Caco-2 (cell line): ENCODE measurements at regions of chr17 and their contacts with region 1.

Region 1: GRCh38 chr17:48024937-48025906 is 12.4 kb downstream of the COPZ2 start:
- DNase-seq: peak; percentile 100
- H3K4me3 ChIP-seq: peak overlapping the region; percentile 43
- H3K4me3 Mint-ChIP-seq: peak overlapping the region; percentile 87
- H3K27ac Mint-ChIP-seq: peak overlapping the region; percentile 89
- H3K4me1 ChIP-seq: peaks cover 26% of the 10 kb centered on the region
- H3K4me1 Mint-ChIP-seq: peaks cover 34% of the 10 kb centered on the region
- H3K27me3 ChIP-seq: peaks cover 5% of the 10 kb centered on the region
- H3K27me3 Mint-ChIP-seq: peaks cover 17% of the 10 kb centered on the region
- CTCF ChIP-seq: peak; percentile 98 to 100

Region 2: DNA sequence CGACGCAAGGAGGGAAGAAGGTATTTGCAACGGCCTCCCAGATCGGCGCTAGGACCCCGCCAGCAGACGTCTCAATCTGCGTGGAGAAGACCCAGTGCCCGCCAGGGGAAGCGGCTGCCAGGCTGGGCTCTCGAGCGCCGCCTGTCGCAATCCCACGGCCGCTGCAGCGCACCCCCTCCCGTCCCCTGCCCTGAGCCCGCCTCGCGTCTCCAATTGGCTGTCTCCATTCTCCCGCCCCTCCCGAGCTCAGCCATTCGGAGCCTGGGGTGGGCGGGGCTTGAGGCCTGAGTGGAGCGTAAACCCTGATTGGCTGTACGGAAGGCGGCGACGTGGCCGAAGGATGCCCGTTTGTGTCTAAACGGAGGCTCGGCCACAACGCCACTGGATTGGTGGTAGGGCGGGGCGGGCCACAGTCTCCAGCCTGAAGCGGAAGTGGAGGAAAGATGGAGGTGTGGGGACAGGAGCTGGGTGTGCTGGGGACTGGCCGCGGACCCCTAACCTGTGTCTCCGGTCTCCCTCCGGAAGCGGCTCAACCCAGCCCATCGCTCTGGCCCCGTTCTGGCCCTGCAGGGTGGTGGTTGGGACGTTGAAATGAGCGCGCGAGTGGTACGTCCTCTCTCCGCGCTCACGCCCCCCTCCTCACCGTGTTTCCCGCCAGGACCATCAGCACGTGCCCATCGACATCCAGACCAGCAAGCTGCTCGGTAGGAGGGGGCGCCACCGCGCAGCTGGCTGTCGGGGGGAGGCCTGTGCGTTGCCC is 54.3 kb before region 1 on chr17 and contains the start of gene CDK5RAP3:
- CTCF ChIA-PET with region 1: interaction called, 37 read pairs
- POLR2A ChIA-PET with region 1: interaction called, 5 read pairs
- intact Hi-C with region 1: no loop called
- DNase-seq: peak; percentile 100
- H3K4me3 ChIP-seq: peak within 1 kb of the TSS; percentile 72
- H3K4me3 Mint-ChIP-seq: peak within 1 kb of the TSS; percentile 94
- H3K27ac Mint-ChIP-seq: peak within 1 kb of the TSS; percentile 92
- H3K4me1 ChIP-seq: peaks cover 40% of the 10 kb centered on the region
- H3K4me1 Mint-ChIP-seq: peaks cover 30% of the 10 kb centered on the region
- H3K27me3 ChIP-seq: no peaks in the 10 kb centered on the region
- H3K27me3 Mint-ChIP-seq: no peaks in the 10 kb centered on the region
- CTCF ChIP-seq: peak; percentile 99 to 100
- total RNA-seq, gene CDK5RAP3: 425 and 427 TPM in 2 replicates

Region 3: DNA sequence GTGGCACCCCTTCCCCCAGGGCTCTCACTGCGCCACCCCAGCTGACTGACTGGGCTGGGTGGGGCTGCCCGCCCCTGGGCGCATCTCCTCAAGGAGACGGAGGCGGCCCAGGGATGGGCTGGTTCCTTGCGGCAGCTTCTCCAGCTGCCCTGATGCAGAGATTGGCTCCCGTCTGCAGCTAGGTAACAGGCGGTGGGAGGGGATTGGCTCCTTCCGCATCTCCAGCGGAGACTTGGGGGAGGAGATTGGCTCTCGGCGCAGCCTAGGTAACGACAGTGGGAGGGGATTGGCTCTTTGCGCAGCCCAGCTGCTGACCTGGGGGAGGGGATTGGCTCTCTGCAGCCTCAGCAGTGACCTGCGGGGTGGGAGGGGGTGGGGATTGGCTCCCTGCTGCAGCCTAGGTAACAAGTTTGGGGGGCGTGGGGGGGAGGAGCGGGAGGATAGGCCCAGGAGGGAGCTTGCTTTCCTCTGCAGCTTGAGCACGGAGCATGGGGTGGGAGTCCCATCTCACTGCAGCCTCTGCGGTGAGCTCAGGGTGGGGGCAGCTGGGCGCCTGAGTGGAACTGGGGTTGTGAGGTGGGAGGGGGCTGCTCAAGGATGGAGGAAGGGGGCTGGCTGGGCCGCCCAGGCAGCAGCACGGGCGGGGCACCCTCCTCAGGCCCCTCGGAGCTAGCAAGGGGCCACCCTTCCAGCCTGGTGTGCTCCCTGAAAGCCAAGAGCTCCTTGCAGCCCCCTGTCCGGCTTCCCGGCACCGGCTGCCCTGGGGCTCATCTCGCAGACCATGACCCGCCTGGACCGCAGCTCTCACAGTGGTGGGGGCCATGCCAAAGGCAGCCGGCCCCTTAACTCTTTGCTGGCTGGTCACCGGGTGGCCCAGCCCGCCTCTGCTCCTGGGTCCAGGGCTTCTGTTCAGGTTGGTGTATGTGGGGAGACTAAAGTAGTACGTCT is 29.3 kb after region 1 on chr17:
- CTCF ChIA-PET with region 1: interaction called, 143 read pairs
- POLR2A ChIA-PET with region 1: interaction called, 46 read pairs
- intact Hi-C with region 1: no loop called
- DNase-seq: peak in 1 of 2 experiments; percentile 53
- H3K4me3 ChIP-seq: no peak overlapping the region
- H3K4me3 Mint-ChIP-seq: peak overlapping the region; percentile 18
- H3K27ac Mint-ChIP-seq: peak overlapping the region; percentile 97
- H3K4me1 ChIP-seq: peaks cover 30% of the 10 kb centered on the region
- H3K4me1 Mint-ChIP-seq: peaks cover 40% of the 10 kb centered on the region
- H3K27me3 ChIP-seq: no peaks in the 10 kb centered on the region
- H3K27me3 Mint-ChIP-seq: no peaks in the 10 kb centered on the region
- CTCF ChIP-seq: no peak

Region 4: DNA sequence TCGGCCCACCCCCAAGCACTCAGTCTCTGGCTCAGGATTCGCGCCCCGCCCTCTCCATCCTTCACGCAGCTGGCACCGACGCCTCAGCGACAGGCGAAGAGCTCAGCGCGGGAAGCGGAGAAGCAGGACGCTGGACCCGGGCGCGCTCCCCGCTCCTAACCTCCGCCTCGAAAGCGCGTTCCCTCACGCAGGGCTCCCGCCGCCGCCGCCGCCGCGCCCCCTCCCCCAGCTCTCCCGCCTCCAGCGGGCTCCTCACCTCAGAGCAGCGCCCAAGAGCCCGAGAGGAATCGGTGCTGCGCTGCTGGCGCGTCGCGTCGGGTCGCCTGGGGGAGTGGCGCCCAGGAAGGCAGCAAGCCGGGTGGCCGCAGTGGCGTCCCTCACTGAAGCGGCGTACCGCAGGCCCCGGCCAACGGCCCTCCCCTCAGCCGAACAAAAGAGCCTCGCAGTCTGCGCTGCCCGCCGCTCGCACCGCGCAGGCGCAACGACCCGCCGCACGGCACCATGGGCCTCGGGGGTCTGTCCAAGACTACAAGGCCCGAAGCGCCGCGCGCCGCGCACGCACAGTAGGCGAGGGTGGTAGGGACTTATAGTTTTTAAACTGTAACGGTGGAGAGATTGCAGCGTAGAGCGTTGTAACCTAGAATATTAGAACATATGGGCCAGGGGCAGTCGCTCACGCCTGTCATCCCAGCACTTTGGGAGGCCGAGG is 75.9 kb after region 1 on chr17 and contains the start of gene CBX1:
- CTCF ChIA-PET with region 1: interaction called, 44 read pairs
- POLR2A ChIA-PET with region 1: no interaction called
- intact Hi-C with region 1: loop called (anchors 2 kb)
- DNase-seq: peak; percentile 99 to 100
- H3K4me3 ChIP-seq: peak within 1 kb of the TSS; percentile 83
- H3K4me3 Mint-ChIP-seq: peak within 1 kb of the TSS; percentile 93
- H3K27ac Mint-ChIP-seq: peak within 1 kb of the TSS; percentile 79
- H3K4me1 ChIP-seq: peaks cover 8% of the 10 kb centered on the region
- H3K4me1 Mint-ChIP-seq: peaks cover 7% of the 10 kb centered on the region
- H3K27me3 ChIP-seq: no peaks in the 10 kb centered on the region
- H3K27me3 Mint-ChIP-seq: no peaks in the 10 kb centered on the region
- CTCF ChIP-seq: no peak
- total RNA-seq, gene CBX1: 213 and 214 TPM in 2 replicates

Region 5: GRCh38 chr17:48181653-48182052 is 156.4 kb after region 1 on chr17:
- CTCF ChIA-PET with region 1: interaction called, 4 read pairs
- POLR2A ChIA-PET with region 1: no interaction called
- intact Hi-C with region 1: loop called (anchors 1 kb)
- DNase-seq: peak; percentile 67 to 76
- H3K4me3 ChIP-seq: no peak overlapping the region
- H3K4me3 Mint-ChIP-seq: no peak overlapping the region
- H3K27ac Mint-ChIP-seq: no peak overlapping the region
- H3K4me1 ChIP-seq: no peaks in the 10 kb centered on the region
- H3K4me1 Mint-ChIP-seq: no peaks in the 10 kb centered on the region
- H3K27me3 ChIP-seq: 0 out of 2 replicates have a peak, but pooled peaks cover 2% of the 10 kb centered on the region
- H3K27me3 Mint-ChIP-seq: peaks cover 18% of the 10 kb centered on the region
- CTCF ChIP-seq: peak; percentile 77 to 95

Region 6: DNA sequence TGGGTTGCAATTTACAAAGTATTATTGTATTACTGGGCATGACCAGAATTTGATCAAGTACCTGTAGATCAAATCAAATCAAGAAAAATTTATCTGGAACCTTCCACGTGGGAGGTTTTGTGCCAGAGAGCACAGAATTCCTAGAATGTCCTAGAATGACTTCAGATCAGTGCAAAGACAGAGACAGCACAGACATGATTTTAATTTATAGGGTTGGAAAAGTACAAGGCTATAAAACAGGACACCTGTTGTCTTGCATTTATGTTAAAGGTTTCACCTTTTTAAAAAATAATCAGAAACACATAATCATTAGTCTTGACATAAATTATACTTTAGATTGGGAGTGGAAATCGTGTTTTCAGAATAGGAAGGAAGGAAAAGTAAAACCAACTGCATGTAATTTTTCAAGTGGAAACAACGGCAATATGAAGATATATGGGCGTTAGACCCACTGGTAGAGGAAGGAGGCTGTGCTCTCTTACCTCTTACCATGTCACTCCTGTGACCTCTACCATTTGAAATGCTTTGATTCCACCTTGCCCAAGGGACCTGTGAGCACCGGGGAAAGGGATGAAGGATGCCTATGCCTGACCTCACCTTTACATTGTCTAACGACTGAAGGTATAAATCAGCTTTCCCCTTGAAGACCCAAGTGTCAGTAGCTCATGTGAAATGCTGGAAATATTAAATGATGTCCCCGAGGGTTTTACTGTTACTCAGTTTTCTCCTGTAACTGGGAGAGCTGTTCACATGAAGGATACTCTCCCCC is 182.7 kb after region 1 on chr17:
- CTCF ChIA-PET with region 1: no interaction called
- POLR2A ChIA-PET with region 1: no interaction called
- intact Hi-C with region 1: no loop called
- DNase-seq: no peak
- H3K4me3 ChIP-seq: no peak overlapping the region
- H3K4me3 Mint-ChIP-seq: no peak overlapping the region
- H3K27ac Mint-ChIP-seq: no peak overlapping the region
- H3K4me1 ChIP-seq: no peaks in the 10 kb centered on the region
- H3K4me1 Mint-ChIP-seq: no peaks in the 10 kb centered on the region
- H3K27me3 ChIP-seq: no peaks in the 10 kb centered on the region
- H3K27me3 Mint-ChIP-seq: peaks cover 4% of the 10 kb centered on the region
- CTCF ChIP-seq: no peak

Region 7: DNA sequence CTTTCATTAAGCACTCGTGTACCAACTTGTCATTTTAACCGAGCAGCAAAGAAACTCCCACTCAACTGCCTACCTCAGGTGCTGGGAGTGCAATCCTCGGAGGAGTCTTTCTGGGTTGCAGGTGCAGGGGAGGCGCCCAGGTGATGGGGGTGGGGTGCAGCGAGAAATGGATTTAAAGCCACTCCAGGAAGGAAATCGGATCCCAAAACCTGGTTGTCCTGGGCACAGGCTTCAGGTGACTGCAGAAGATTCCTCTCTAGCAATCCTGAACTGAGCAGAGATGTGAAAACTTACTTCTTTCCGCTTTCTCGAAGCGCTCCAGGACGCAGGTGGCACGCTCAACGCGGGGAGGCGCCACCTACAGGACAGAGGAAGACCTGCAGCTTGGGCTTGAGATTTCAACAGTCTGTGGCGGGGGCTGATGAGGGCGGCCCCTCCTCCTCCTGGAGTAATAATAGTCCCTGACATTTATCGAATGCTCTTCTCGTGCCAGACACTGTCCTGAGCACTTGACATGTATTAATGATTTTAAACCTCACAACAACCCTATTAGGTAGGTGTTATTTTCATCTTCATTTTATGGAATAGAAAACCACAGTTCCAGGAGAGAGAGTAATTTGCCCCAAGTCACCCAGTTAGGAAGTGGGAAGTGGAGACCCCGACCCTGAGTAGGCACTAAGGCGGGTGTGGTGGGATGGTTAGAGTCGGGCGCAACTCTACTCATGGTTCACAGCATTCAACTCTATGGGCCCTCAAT is 432.0 kb after region 1 on chr17:
- CTCF ChIA-PET with region 1: interaction called, 3 read pairs
- POLR2A ChIA-PET with region 1: no interaction called
- intact Hi-C with region 1: loop called (anchors 5 kb)
- DNase-seq: peak; percentile 80 to 90
- H3K4me3 ChIP-seq: peak overlapping the region; percentile 17
- H3K4me3 Mint-ChIP-seq: peak overlapping the region; percentile 69
- H3K27ac Mint-ChIP-seq: peak overlapping the region; percentile 31
- H3K4me1 ChIP-seq: peaks cover 18% of the 10 kb centered on the region
- H3K4me1 Mint-ChIP-seq: peaks cover 19% of the 10 kb centered on the region
- H3K27me3 ChIP-seq: no peaks in the 10 kb centered on the region; the same call in 1 of the 2 replicates
- H3K27me3 Mint-ChIP-seq: peaks cover 16% of the 10 kb centered on the region
- CTCF ChIP-seq: peak; percentile 100